Activated CD4-positive, alpha-beta T cell treated with anti-CD3 and anti-CD28 coated beads, Interleukin-2, amount 10 ng/mL, durations not matched to agents 24 days and 14 days (primary cell): ENCODE measurements at regions of chr9 and their contacts with region 1.

Region 1: GRCh38 chr9:96418074-96418809 is at the start of gene ZNF367:
- DNase-seq: peak; percentile 98
- H3K4me3 Mint-ChIP-seq: peak within 1 kb of the TSS; percentile 97
- H3K27ac Mint-ChIP-seq: peak within 1 kb of the TSS; percentile 95
- H3K4me1 Mint-ChIP-seq: peaks cover 38% of the 10 kb centered on the region
- H3K27me3 Mint-ChIP-seq: no peaks in the 10 kb centered on the region
- total RNA-seq, gene ZNF367: 21.7 and 22.1 TPM in 2 replicates

Region 2: GRCh38 chr9:94726495-94727191 is 1691.6 kb before region 1 on chr9 and contains the start of gene AOPEP:
- intact Hi-C with region 1: loop called (anchors 5 kb)
- DNase-seq: peak; percentile 100
- H3K4me3 Mint-ChIP-seq: peak within 1 kb of the TSS; percentile 94
- H3K27ac Mint-ChIP-seq: peak within 1 kb of the TSS; percentile 97
- H3K4me1 Mint-ChIP-seq: peaks cover 6% of the 10 kb centered on the region
- H3K27me3 Mint-ChIP-seq: no peaks in the 10 kb centered on the region
- total RNA-seq, gene AOPEP: 17.9 and 20.7 TPM in 2 replicates

Region 3: GRCh38 chr9:96398582-96399324 is 19.5 kb before region 1 on chr9:
- intact Hi-C with region 1: loop called (anchors 2 kb)
- DNase-seq: peak; percentile 72
- H3K4me3 Mint-ChIP-seq: peak overlapping the region; percentile 69
- H3K27ac Mint-ChIP-seq: peak overlapping the region; percentile 84
- H3K4me1 Mint-ChIP-seq: peaks cover 32% of the 10 kb centered on the region
- H3K27me3 Mint-ChIP-seq: no peaks in the 10 kb centered on the region

Region 4: DNA sequence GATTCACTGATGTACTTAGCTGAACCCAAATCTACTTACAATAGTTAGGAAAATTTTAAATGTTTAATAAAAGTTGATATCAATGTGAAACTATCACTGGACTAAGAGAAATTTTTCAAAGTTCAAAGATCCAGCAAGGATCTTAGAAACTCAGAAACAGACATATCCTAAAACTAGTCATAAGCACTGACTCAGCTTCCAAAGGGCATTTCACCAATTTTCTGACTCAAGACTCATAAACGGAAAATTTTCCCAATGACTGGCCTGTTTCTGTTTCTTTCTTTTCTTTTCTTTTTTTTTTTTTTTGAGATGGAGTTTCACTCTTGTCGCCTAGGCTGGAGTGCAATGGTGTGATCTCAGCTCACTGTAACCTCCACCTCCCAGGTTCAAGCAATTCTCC is 134.8 kb after region 1 on chr9:
- intact Hi-C with region 1: loop called (anchors 5 kb)
- DNase-seq: no peak
- H3K4me3 Mint-ChIP-seq: no peak overlapping the region
- H3K27ac Mint-ChIP-seq: peak overlapping the region; percentile 60
- H3K4me1 Mint-ChIP-seq: peaks cover 13% of the 10 kb centered on the region
- H3K27me3 Mint-ChIP-seq: peaks cover 2% of the 10 kb centered on the region

Region 5: DNA sequence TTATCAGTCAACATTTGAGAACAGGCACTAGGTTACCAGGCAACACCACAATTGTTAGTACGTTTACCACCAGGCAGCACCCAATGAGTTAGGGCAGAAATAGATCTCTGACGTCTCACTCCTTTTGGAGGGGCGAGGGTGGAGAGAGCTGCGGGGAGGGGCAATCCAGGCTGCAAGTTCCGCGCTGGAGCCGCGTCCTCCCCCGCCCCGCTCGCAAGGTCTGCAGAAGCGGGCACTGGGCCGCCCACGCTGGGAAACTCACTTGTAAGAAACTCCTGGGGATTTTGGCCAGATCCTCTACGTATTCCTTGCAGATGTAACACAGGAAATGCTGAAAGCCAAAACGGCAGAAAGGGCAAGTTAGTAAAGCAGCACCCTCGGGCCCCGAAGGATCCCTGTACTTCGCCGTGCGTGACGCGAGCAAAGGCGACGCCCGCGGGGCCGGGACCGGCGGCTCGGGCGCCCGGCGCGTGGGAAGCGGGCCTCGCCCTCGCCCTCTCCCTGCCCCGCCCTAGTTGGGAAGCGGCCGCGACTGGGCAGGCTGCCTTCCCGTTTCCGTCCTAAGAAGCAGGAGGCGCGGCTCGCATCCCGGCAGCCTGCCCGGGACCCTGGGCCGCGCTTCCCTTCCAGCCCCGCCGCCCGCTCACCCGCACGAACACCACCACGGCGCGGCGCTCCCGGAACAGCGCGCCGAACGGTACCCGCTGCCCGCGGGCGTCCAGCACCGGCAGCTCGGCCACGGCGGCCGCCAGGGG is 236.4 kb after region 1 on chr9:
- intact Hi-C with region 1: loop called (anchors 1 kb)
- DNase-seq: peak; percentile 88
- H3K4me3 Mint-ChIP-seq: peak overlapping the region; percentile 89
- H3K27ac Mint-ChIP-seq: peak overlapping the region; percentile 88
- H3K4me1 Mint-ChIP-seq: peaks cover 12% of the 10 kb centered on the region
- H3K27me3 Mint-ChIP-seq: peaks cover 10% of the 10 kb centered on the region